ENCODE measurements at regions of chr9 and their contacts with region 1.

Region 1: GRCh38 chr9:125024917-125025316 is 84.0 kb upstream of the GOLGA1 start:
- DNase-seq: no peak
- ATAC-seq: no peak
- H3K4me3 ChIP-seq: no peak overlapping the region
- H3K4me3 Mint-ChIP-seq: no peak overlapping the region
- H3K27ac ChIP-seq: no peak overlapping the region
- H3K27ac Mint-ChIP-seq: no peak overlapping the region
- H3K4me1 ChIP-seq: no peaks in the 10 kb centered on the region
- H3K4me1 Mint-ChIP-seq: no peaks in the 10 kb centered on the region
- H3K27me3 ChIP-seq: no peaks in the 10 kb centered on the region
- H3K27me3 Mint-ChIP-seq: no peaks in the 10 kb centered on the region

Region 2: GRCh38 chr9:125003332-125003731 is 21.6 kb before region 1 on chr9:
- CTCF ChIA-PET with region 1: no interaction called
- POLR2A ChIA-PET with region 1: no interaction called
- DNase-seq: no peak
- ATAC-seq: no peak
- H3K4me3 ChIP-seq: no peak overlapping the region
- H3K4me3 Mint-ChIP-seq: no peak overlapping the region
- H3K27ac ChIP-seq: no peak overlapping the region
- H3K27ac Mint-ChIP-seq: no peak overlapping the region
- H3K4me1 ChIP-seq: no peaks in the 10 kb centered on the region
- H3K4me1 Mint-ChIP-seq: no peaks in the 10 kb centered on the region
- H3K27me3 ChIP-seq: no peaks in the 10 kb centered on the region
- H3K27me3 Mint-ChIP-seq: no peaks in the 10 kb centered on the region

Region 3: DNA sequence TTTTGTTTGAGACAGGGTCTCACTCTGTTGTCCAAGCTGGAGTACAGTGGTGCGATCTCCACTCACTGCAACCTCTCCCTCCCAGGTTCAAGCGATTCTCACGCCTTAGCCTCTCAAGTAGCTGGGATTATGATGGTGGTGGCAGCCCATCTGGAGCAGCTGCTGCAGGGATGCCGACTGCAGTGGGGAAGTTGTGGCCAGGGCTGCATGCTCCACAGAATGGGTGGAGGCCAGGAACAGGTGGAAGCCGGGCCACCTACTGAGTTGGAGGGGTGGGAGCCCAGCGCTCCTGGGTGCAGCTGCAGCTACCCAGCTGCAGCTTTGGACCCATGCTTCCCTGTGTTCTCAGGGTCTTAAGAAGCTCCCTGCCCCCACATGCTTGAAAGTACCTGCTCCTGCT is 18.7 kb after region 1 on chr9:
- CTCF ChIA-PET with region 1: no interaction called
- POLR2A ChIA-PET with region 1: interaction called in 1 of 2 experiments, 18 read pairs
- DNase-seq: no peak
- ATAC-seq: no peak
- H3K4me3 ChIP-seq: no peak overlapping the region
- H3K4me3 Mint-ChIP-seq: no peak overlapping the region
- H3K27ac ChIP-seq: no peak overlapping the region
- H3K27ac Mint-ChIP-seq: no peak overlapping the region
- H3K4me1 ChIP-seq: no peaks in the 10 kb centered on the region
- H3K4me1 Mint-ChIP-seq: peaks cover 0 to 2% (median 0%) of the 10 kb centered on the region in 3 donors
- H3K27me3 ChIP-seq: no peaks in the 10 kb centered on the region
- H3K27me3 Mint-ChIP-seq: no peaks in the 10 kb centered on the region

Region 4: DNA sequence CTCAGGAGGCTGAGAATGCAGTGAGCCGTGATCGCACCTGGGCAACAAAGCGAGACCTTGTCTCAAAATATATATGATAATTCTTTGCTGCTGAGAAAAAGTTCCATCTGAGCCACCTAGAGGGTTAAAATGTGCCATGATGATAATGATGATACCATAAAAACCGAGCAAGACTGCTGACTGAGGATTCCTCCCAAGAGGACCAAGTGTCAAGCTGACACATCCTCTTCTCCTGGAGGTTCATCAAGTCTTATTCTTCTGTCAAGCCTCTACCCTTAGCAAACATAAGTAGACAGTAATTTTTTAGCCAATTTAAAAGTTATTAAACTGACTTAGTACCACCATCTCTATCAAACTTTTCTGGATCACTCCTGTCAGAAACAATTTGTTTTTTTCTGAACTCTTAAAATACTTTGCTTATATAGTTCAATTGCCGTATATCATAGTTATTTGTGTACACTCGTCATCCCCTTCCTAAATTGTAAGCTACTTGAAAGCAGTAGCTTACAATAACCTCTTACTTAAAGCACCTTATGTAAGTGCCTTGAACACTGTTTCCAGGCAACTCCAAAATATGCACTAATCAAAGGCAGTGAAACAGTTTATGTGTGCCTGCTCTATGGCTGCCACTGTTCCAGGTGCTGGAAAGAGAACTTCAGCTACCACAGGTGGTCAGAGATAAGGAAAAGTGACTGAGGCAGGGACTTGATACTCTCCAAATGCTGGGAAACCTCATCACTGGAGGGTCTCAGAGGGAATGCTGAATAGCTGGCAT is 61.0 kb after region 1 on chr9:
- CTCF ChIA-PET with region 1: no interaction called
- POLR2A ChIA-PET with region 1: no interaction called
- DNase-seq: no peak
- ATAC-seq: no peak
- H3K4me3 ChIP-seq: no peak overlapping the region
- H3K4me3 Mint-ChIP-seq: no peak overlapping the region
- H3K27ac ChIP-seq: no peak overlapping the region
- H3K27ac Mint-ChIP-seq: no peak overlapping the region
- H3K4me1 ChIP-seq: no peaks in the 10 kb centered on the region
- H3K4me1 Mint-ChIP-seq: peaks cover 5 to 24% (median 10%) of the 10 kb centered on the region in 3 donors
- H3K27me3 ChIP-seq: no peaks in the 10 kb centered on the region
- H3K27me3 Mint-ChIP-seq: no peaks in the 10 kb centered on the region

Measured in T-cell (primary cell).